Endothelial cell of umbilical vein (primary cell): ENCODE measurements at regions of chr3 and their contacts with region 1.

Region 1: DNA sequence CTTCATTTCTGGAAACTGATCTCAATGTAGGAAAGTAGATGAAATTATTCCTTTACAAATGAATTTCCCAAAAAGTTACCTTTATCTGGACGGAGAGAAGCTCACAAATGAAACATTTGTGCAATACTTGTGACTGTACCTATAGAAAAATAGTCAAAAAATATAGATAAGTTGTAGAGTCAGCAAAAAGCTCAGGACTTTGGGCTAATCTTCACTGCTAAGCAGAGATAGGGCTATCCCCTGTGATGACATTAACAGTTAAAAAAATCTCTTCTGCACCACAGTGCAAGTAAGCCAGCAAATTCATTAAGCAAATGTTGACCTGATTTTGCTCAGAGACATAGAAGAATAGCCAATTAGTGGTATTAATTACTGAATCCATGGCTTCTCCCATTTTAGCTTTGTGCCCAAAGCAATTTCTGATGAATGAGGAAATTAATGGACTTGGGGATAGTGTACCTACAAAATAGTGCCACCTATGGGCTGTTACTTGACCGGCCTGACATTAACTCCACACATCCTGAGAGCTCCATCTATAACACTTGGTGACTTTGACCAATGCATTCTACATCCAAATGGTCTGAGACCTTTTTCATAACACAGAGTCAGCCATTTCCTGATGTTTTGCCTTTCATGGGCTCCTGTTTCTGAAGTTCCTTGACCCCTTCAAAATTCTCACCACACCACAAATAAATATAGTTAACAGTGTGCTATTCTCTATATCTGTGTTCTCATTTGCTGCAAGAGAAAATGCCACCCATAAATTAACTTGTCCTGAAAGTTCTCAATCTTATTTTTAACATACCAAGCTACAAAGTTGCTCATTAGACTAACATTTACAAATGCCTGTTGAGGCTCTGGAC is 105.0 kb downstream of the SSR3 start:
- DNase-seq: peak; percentile 67
- H3K4me3 ChIP-seq: no peak overlapping the region
- H3K27ac ChIP-seq: no peak overlapping the region
- H3K4me1 ChIP-seq: peaks cover 5% of the 10 kb centered on the region
- H3K27me3 ChIP-seq: no peaks in the 10 kb centered on the region
- CTCF ChIP-seq: peak; percentile 58 to 59
- POLR2A ChIP-seq: no peak

Region 2: GRCh38 chr3:156307704-156308103 is 142.2 kb before region 1 on chr3:
- CTCF ChIA-PET with region 1: no interaction called
- POLR2A ChIA-PET with region 1: no interaction called
- dilution Hi-C with region 1: no loop called
- intact Hi-C with region 1: loop called (anchors 5 kb)
- DNase-seq: peak; percentile 89
- H3K4me3 ChIP-seq: no peak overlapping the region
- H3K27ac ChIP-seq: peak overlapping the region; percentile 57
- H3K4me1 ChIP-seq: peaks cover 48% of the 10 kb centered on the region
- H3K27me3 ChIP-seq: no peaks in the 10 kb centered on the region
- CTCF ChIP-seq: no peak
- POLR2A ChIP-seq: no peak

Region 3: DNA sequence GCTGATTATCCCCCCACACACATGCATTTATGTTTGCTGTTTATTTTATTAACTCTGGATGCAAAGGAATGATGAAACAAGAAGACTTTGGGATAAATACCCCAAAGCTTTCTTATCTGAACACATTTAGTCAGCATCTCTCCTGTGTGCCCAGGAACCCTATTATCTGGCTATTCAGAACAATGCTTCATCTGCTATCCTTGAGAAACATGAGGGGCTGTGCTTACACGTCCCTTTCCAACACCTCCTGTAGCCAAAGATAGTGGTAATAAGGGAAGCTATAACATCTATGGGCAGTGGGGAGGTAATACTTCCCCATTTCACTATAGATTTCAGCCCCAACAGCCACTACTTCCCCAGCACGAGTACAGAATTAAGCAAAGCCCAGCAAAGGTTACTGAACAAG is 10.3 kb after region 1 on chr3:
- CTCF ChIA-PET with region 1: interaction called, 25 read pairs
- POLR2A ChIA-PET with region 1: no interaction called
- dilution Hi-C with region 1: no loop called
- intact Hi-C with region 1: no loop called
- DNase-seq: no peak
- H3K4me3 ChIP-seq: no peak overlapping the region
- H3K27ac ChIP-seq: no peak overlapping the region
- H3K4me1 ChIP-seq: no peaks in the 10 kb centered on the region
- H3K27me3 ChIP-seq: no peaks in the 10 kb centered on the region
- CTCF ChIP-seq: no peak
- POLR2A ChIP-seq: no peak

Region 4: DNA sequence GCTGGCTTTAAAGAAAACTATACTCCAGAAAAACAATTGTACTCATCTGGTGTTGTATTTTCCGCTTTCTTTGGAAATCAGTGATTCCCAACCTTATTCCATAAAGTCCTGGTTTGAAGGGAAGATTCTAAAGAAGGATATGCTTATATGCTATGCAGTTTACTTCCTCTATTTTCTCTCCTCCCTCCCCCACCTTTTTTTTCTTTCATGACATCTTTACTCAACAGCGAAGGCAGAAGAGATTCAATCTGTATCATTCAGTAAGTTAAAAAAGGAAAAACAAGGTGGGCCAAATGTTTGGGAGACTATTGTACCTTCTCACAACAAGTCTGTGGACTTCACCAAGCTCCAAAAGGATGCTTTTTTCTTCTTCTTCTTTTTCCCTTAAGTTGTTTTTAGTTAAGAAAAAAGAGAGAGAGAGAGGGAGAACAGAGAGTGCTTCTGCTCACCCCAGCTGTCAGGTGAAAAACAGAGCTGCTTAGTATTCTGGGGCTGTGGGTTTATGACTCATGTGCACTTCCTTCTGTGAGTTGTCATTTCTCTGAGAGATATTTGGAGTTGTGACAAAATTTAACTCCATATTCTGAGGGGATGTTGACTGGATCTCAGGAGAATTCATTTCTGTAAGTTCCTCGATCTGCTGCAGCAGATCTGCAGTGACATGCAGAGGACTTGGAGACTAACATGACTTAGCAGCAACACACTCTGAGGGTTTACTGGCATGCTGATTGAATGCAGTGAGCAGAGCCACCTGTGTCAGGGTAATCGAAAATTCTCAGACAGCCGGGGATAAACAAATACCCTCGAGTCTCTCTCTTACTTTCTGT is 34.2 kb after region 1 on chr3:
- CTCF ChIA-PET with region 1: interaction called, 11 read pairs
- POLR2A ChIA-PET with region 1: interaction called, 9 read pairs
- dilution Hi-C with region 1: no loop called
- intact Hi-C with region 1: loop called (anchors 2 kb)
- DNase-seq: peak; percentile 82
- H3K4me3 ChIP-seq: peak overlapping the region in 1 of 3 experiments; percentile 16
- H3K27ac ChIP-seq: peak overlapping the region; percentile 28
- H3K4me1 ChIP-seq: peaks cover 33% of the 10 kb centered on the region
- H3K27me3 ChIP-seq: no peaks in the 10 kb centered on the region
- CTCF ChIP-seq: no peak
- POLR2A ChIP-seq: no peak